Endothelial cell of umbilical vein (primary cell): ENCODE measurements at regions of chr11 and their contacts with region 1.

Region 1: GRCh38 chr11:123707606-123708205 is 33.8 kb downstream of the ZNF202 start:
- DNase-seq: peak; percentile 75
- H3K4me3 ChIP-seq: no peak overlapping the region
- H3K27ac ChIP-seq: no peak overlapping the region
- H3K4me1 ChIP-seq: no peaks in the 10 kb centered on the region
- H3K27me3 ChIP-seq: no peaks in the 10 kb centered on the region
- CTCF ChIP-seq: peak; percentile 61 to 69
- POLR2A ChIP-seq: no peak

Region 2: GRCh38 chr11:123103326-123103980 is 604.3 kb before region 1 on chr11:
- CTCF ChIA-PET with region 1: interaction called, 16 read pairs
- POLR2A ChIA-PET with region 1: no interaction called
- dilution Hi-C with region 1: no loop called
- intact Hi-C with region 1: loop called (anchors 5 kb)
- DNase-seq: peak; percentile 75
- H3K4me3 ChIP-seq: no peak overlapping the region
- H3K27ac ChIP-seq: no peak overlapping the region
- H3K4me1 ChIP-seq: peaks cover 2% of the 10 kb centered on the region
- H3K27me3 ChIP-seq: no peaks in the 10 kb centered on the region
- CTCF ChIP-seq: peak; percentile 58 to 62
- POLR2A ChIP-seq: no peak

Region 3: GRCh38 chr11:123560006-123560405 is 147.7 kb before region 1 on chr11:
- CTCF ChIA-PET with region 1: interaction called, 19 read pairs
- POLR2A ChIA-PET with region 1: no interaction called
- dilution Hi-C with region 1: no loop called
- intact Hi-C with region 1: no loop called
- DNase-seq: no peak
- H3K4me3 ChIP-seq: no peak overlapping the region
- H3K27ac ChIP-seq: no peak overlapping the region
- H3K4me1 ChIP-seq: no peaks in the 10 kb centered on the region
- H3K27me3 ChIP-seq: peaks cover 0 to 9% of the 10 kb centered on the region in 2 experiments
- CTCF ChIP-seq: no peak
- POLR2A ChIP-seq: no peak

Region 4: DNA sequence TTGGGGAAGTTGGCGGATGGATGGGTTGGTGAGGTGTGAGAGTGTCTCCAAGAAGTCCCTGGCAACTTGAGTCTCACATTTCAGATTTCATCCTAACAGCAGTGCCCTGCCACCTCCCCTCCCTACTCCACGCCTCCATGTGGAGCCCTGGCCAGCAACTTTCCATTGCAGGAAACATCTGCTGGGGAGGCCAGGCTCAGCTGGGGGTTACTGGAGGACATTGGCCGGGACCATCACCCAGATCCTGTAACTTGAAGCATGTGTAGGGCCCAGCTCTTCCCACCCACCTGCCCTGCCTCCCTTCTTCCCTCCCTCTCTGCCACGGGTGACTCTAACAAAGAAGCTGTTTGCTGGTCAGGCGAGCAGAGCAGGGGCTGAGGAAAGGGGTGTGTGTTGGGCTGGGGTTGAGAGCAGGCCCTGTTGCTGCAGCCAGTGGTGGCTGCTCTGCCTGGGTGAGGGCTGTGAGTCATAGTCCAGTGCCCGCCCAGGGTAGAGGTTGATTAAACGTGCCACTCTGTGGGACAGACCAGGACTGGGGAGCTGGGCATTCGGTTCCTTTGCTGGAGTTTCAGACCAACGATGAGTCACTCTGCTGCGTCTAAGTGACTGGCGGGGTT is 117.3 kb before region 1 on chr11:
- CTCF ChIA-PET with region 1: interaction called, 14 read pairs
- POLR2A ChIA-PET with region 1: no interaction called
- dilution Hi-C with region 1: no loop called
- intact Hi-C with region 1: no loop called
- DNase-seq: peak; percentile 95
- H3K4me3 ChIP-seq: no peak overlapping the region
- H3K27ac ChIP-seq: no peak overlapping the region
- H3K4me1 ChIP-seq: peaks cover 18% of the 10 kb centered on the region
- H3K27me3 ChIP-seq: no peaks in the 10 kb centered on the region
- CTCF ChIP-seq: no peak
- POLR2A ChIP-seq: no peak

Region 5: GRCh38 chr11:123640677-123641494 is 66.8 kb before region 1 on chr11:
- CTCF ChIA-PET with region 1: interaction called, 302 read pairs
- POLR2A ChIA-PET with region 1: no interaction called
- dilution Hi-C with region 1: no loop called
- intact Hi-C with region 1: loop called (anchors 1 kb)
- DNase-seq: peak; percentile 49
- H3K4me3 ChIP-seq: no peak overlapping the region
- H3K27ac ChIP-seq: no peak overlapping the region
- H3K4me1 ChIP-seq: no peaks in the 10 kb centered on the region
- H3K27me3 ChIP-seq: no peaks in the 10 kb centered on the region
- CTCF ChIP-seq: peak; percentile 70 to 89
- POLR2A ChIP-seq: no peak

Region 6: GRCh38 chr11:123692961-123693360 is 14.7 kb before region 1 on chr11:
- CTCF ChIA-PET with region 1: interaction called, 18 read pairs
- POLR2A ChIA-PET with region 1: no interaction called
- dilution Hi-C with region 1: no loop called
- intact Hi-C with region 1: no loop called
- DNase-seq: no peak
- H3K4me3 ChIP-seq: no peak overlapping the region
- H3K27ac ChIP-seq: no peak overlapping the region
- H3K4me1 ChIP-seq: no peaks in the 10 kb centered on the region
- H3K27me3 ChIP-seq: peaks cover 0 to 2% of the 10 kb centered on the region in 2 experiments
- CTCF ChIP-seq: no peak
- POLR2A ChIP-seq: no peak

Region 7: GRCh38 chr11:123729602-123730001 is 21.9 kb after region 1 on chr11:
- CTCF ChIA-PET with region 1: interaction called, 11 read pairs
- POLR2A ChIA-PET with region 1: no interaction called
- dilution Hi-C with region 1: no loop called
- intact Hi-C with region 1: no loop called
- DNase-seq: no peak
- H3K4me3 ChIP-seq: no peak overlapping the region
- H3K27ac ChIP-seq: no peak overlapping the region
- H3K4me1 ChIP-seq: peaks cover 4% of the 10 kb centered on the region
- H3K27me3 ChIP-seq: no peaks in the 10 kb centered on the region
- CTCF ChIP-seq: no peak
- POLR2A ChIP-seq: no peak